ENCODE measurements at regions of chr7 and their contacts with region 1.

Region 1: GRCh38 chr7:94289071-94289470 is 105.6 kb upstream of the COL1A2 start:
- DNase-seq: peak; percentile 87
- H3K4me3 ChIP-seq: no peak overlapping the region
- H3K27ac ChIP-seq: no peak overlapping the region
- H3K4me1 ChIP-seq: no peaks in the 10 kb centered on the region
- H3K27me3 ChIP-seq: no peaks in the 10 kb centered on the region
- CTCF ChIP-seq: peak; percentile 90 to 96
- POLR2A ChIP-seq: no peak

Region 2: GRCh38 chr7:93715234-93715633 is 573.8 kb before region 1 on chr7:
- CTCF ChIA-PET with region 1: interaction called, 22 read pairs
- POLR2A ChIA-PET with region 1: no interaction called
- dilution Hi-C with region 1: no loop called
- intact Hi-C with region 1: no loop called
- DNase-seq: peak; percentile 58
- H3K4me3 ChIP-seq: no peak overlapping the region
- H3K27ac ChIP-seq: no peak overlapping the region
- H3K4me1 ChIP-seq: no peaks in the 10 kb centered on the region
- H3K27me3 ChIP-seq: peaks cover 15 to 26% of the 10 kb centered on the region in 2 experiments
- CTCF ChIP-seq: peak; percentile 71 to 72
- POLR2A ChIP-seq: no peak

Region 3: GRCh38 chr7:94247970-94248369 is 41.1 kb before region 1 on chr7:
- CTCF ChIA-PET with region 1: no interaction called
- POLR2A ChIA-PET with region 1: no interaction called
- dilution Hi-C with region 1: no loop called
- intact Hi-C with region 1: no loop called
- DNase-seq: no peak
- H3K4me3 ChIP-seq: no peak overlapping the region
- H3K27ac ChIP-seq: no peak overlapping the region
- H3K4me1 ChIP-seq: no peaks in the 10 kb centered on the region
- H3K27me3 ChIP-seq: no peaks in the 10 kb centered on the region
- CTCF ChIP-seq: no peak
- POLR2A ChIP-seq: no peak

Region 4: GRCh38 chr7:94301024-94301586 is 12.0 kb after region 1 on chr7:
- CTCF ChIA-PET with region 1: interaction called, 60 read pairs
- POLR2A ChIA-PET with region 1: no interaction called
- dilution Hi-C with region 1: no loop called
- intact Hi-C with region 1: no loop called
- DNase-seq: peak; percentile 93
- H3K4me3 ChIP-seq: no peak overlapping the region
- H3K27ac ChIP-seq: peak overlapping the region; percentile 72
- H3K4me1 ChIP-seq: peaks cover 24% of the 10 kb centered on the region
- H3K27me3 ChIP-seq: no peaks in the 10 kb centered on the region
- CTCF ChIP-seq: no peak
- POLR2A ChIP-seq: no peak

Region 5: GRCh38 chr7:94374231-94374630 is 85.2 kb after region 1 on chr7:
- CTCF ChIA-PET with region 1: interaction called, 22 read pairs
- POLR2A ChIA-PET with region 1: no interaction called
- dilution Hi-C with region 1: no loop called
- intact Hi-C with region 1: no loop called
- DNase-seq: peak; percentile 92
- H3K4me3 ChIP-seq: no peak overlapping the region
- H3K27ac ChIP-seq: peak overlapping the region; percentile 85
- H3K4me1 ChIP-seq: peaks cover 21% of the 10 kb centered on the region
- H3K27me3 ChIP-seq: no peaks in the 10 kb centered on the region
- CTCF ChIP-seq: no peak
- POLR2A ChIP-seq: no peak

Region 6: GRCh38 chr7:94436018-94436604 is 147.0 kb after region 1 on chr7:
- CTCF ChIA-PET with region 1: interaction called, 276 read pairs
- POLR2A ChIA-PET with region 1: no interaction called
- dilution Hi-C with region 1: loop called (anchors 25 kb)
- intact Hi-C with region 1: loop called (anchors 1 kb)
- DNase-seq: peak; percentile 69
- H3K4me3 ChIP-seq: no peak overlapping the region
- H3K27ac ChIP-seq: no peak overlapping the region
- H3K4me1 ChIP-seq: no peaks in the 10 kb centered on the region
- H3K27me3 ChIP-seq: peaks cover 0 to 4% of the 10 kb centered on the region in 2 experiments
- CTCF ChIP-seq: peak; percentile 73 to 83
- POLR2A ChIP-seq: no peak

Region 7: DNA sequence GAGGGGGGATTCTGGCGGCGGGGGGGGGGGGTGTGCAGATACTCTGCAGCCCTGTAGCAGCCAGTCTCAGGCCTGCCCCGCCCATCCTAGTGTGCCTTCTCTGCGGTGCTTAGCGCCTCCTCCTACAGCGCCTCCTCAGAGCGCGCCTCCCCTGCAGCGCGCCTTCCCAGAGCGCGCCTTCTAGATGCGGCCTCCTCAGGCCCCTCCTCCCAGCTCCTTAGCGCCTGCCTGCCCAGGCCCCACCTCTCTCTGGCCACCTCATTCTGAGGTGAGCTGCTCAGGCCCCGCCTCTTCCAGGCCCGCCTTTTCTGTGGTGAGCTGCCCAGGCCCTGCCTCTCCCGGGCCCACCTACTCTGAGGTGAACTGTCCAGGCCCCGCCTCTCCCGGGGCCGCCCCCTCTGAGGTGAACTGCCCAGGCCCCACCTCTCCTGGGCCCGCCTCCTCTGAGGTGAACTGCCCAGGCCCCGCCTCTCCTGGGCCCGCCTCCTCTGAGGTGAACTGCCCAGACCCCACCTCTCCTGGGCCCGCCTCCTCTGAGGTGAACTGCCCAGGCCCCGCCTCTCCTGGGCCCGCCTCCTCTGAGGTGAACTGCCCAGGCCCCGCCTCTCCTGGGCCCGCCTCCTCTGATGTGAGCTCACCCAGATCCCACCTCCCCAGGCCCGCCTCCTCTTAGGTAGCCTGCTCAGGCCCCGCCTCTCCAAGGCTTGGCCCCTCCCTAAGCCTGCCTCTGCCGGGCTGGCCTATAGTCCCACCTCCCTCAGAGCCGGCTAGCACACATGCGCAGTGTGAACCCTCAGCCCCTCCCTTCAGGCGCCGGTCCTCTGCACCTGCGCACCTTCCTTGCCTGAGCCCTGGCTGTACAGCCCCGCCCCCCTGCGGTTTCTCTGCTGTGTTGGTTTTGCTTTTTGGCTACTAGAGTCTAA is 369.0 kb after region 1 on chr7:
- CTCF ChIA-PET with region 1: interaction called, 16 read pairs
- POLR2A ChIA-PET with region 1: no interaction called
- dilution Hi-C with region 1: no loop called
- intact Hi-C with region 1: loop called (anchors 5 kb)
- DNase-seq: peak; percentile 95
- H3K4me3 ChIP-seq: peak overlapping the region in 2 of 3 experiments; percentile 38 to 41
- H3K27ac ChIP-seq: peak overlapping the region; percentile 47
- H3K4me1 ChIP-seq: peaks cover 20% of the 10 kb centered on the region
- H3K27me3 ChIP-seq: no peaks in the 10 kb centered on the region
- CTCF ChIP-seq: no peak
- POLR2A ChIP-seq: no peak

Region 8: GRCh38 chr7:95476904-95477594 is 1188.0 kb after region 1 on chr7:
- CTCF ChIA-PET with region 1: interaction called, 17 read pairs
- POLR2A ChIA-PET with region 1: no interaction called
- dilution Hi-C with region 1: no loop called
- intact Hi-C with region 1: no loop called
- DNase-seq: peak; percentile 68
- H3K4me3 ChIP-seq: no peak overlapping the region
- H3K27ac ChIP-seq: no peak overlapping the region
- H3K4me1 ChIP-seq: no peaks in the 10 kb centered on the region
- H3K27me3 ChIP-seq: peaks cover 2 to 6% of the 10 kb centered on the region in 2 experiments
- CTCF ChIP-seq: peak; percentile 59 to 67
- POLR2A ChIP-seq: no peak

Measured in endothelial cell of umbilical vein (primary cell).